PC-9 (cell line): ENCODE measurements at regions of chr9 and their contacts with region 1.

Region 1: GRCh38 chr9:95970317-95970716 is 94.8 kb downstream of the ERCC6L2 start:
- DNase-seq: no peak
- H3K4me3 ChIP-seq: no peak overlapping the region
- H3K27ac ChIP-seq: no peak overlapping the region
- H3K4me1 ChIP-seq: no peaks in the 10 kb centered on the region
- H3K27me3 ChIP-seq: no peaks in the 10 kb centered on the region
- CTCF ChIP-seq: no peak

Region 2: DNA sequence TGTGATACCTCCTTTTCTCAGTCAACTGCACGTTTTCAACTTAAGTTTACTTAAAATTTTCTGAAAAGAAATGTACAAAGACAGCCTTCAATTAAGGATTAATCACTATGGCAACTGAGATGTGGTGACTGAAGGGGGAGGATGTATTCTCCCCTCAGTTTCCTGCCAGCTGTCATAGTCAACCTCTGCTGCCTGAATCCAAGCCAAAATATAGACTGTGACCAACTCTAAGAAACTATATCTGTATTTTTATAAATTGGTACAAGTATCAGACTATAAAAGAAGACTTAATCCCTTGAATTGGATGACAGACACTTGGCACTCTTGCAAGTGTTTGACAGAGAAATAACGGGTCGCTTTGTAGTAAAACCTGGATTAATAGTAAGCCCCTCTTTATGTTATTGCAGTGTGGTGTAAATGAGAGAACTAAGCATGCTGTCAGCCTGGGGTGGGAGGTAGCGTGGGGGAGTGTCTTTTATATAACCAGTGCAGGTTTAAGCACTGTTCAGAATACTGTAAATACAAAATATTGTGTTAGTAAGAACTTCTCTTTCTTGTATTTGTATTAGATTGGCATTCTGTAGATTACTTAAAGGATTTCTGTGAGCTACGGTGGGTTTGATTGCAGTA is 11.6 kb after region 1 on chr9:
- CTCF ChIA-PET with region 1: no interaction called
- POLR2A ChIA-PET with region 1: no interaction called
- intact Hi-C with region 1: no loop called
- DNase-seq: no peak
- H3K4me3 ChIP-seq: no peak overlapping the region
- H3K27ac ChIP-seq: no peak overlapping the region
- H3K4me1 ChIP-seq: no peaks in the 10 kb centered on the region
- H3K27me3 ChIP-seq: no peaks in the 10 kb centered on the region
- CTCF ChIP-seq: no peak

Region 3: GRCh38 chr9:96004379-96004778 is 34.1 kb after region 1 on chr9:
- CTCF ChIA-PET with region 1: no interaction called
- POLR2A ChIA-PET with region 1: no interaction called
- intact Hi-C with region 1: loop called (anchors 1 kb)
- DNase-seq: no peak
- H3K4me3 ChIP-seq: no peak overlapping the region
- H3K27ac ChIP-seq: no peak overlapping the region
- H3K4me1 ChIP-seq: no peaks in the 10 kb centered on the region
- H3K27me3 ChIP-seq: no peaks in the 10 kb centered on the region
- CTCF ChIP-seq: no peak